ENCODE measurements at regions of chr19 and their contacts with region 1.

Region 1: DNA sequence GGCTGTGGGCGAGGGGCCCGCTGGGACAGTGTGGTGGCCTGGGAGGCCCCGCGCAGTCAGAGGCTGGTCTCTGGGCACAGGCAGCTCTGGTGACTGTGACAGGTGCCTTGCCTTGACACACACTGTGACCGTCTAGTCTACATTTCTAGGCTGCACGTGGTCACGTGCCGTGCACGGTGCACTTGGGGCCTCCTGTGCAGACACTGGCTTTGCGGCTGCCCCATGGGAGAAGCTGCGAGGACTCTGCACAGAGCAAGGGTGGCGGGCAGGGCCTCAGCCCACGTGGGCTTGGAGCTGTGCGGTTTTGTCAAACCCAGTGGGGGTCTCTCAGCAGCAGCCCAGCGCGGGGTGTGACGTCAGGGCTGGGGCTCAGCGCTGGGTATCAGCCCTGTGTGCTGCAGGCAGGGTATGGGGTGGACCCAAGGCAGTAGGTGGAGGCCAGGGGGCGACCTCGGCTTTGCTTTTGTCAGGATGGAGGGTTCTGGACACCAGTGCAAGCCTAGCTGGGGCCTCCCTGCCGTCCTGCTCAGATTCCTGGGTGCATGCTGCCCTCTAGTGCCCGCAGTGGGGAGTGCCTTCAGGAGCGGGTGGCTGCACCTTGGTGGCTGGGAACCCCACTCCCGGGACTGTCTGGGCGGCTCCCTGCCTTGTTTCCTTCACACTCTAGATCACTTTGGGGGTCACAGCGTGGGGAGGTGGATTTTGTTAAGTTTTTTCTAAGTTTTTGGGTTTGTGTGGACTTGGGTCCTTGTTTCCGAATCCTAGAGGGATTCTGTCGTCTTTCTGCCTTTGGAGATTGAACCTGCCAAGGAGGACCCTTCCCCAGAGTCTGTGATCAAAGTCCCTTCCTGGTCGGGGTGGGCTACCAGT is 62.6 kb downstream of the KDM4B start:
- DNase-seq: peak; percentile 12
- ATAC-seq: peak; percentile 98
- H3K4me3 ChIP-seq: no peak overlapping the region
- H3K27ac ChIP-seq: no peak overlapping the region
- H3K4me1 ChIP-seq: peaks cover 7% of the 10 kb centered on the region
- H3K27me3 ChIP-seq: no peaks in the 10 kb centered on the region
- CTCF ChIP-seq: peak; percentile 92 to 97 (median 96); a peak in 5 of 6 replicates
- EP300 ChIP-seq: no peak
- POLR2A ChIP-seq: no peak
- RAD21 ChIP-seq: peak; percentile 90

Region 2: DNA sequence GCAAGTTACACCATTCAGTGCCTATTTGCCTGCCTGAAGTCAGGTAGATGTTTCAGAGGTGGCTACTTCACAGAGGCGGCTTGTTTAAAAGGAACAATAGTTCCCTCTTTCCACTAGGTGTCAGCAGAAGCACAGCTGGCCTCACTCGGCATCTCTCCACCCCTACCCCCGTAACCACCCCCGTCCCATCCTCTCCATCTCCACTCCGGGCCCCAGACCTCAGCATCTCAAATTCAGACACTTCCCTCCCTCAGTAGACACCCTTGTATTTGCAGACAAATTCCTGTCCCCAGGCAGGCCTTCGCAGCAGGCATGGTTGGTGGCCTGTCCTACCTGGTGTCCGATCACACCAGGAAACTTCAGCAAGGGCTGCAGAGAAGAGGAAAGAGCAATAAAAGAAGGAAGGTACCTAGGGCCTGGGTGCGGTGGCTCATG is 298.8 kb before region 1 on chr19:
- CTCF ChIA-PET with region 1: no interaction called
- POLR2A ChIA-PET with region 1: no interaction called
- RAD21 ChIA-PET with region 1: no interaction called
- SMC1A ChIA-PET with region 1: no interaction called
- in situ Hi-C with region 1: no loop called
- intact Hi-C with region 1: loop called (anchors 5 kb)
- DNase-seq: no peak
- ATAC-seq: peak; percentile 97
- H3K4me3 ChIP-seq: no peak overlapping the region
- H3K27ac ChIP-seq: no peak overlapping the region
- H3K4me1 ChIP-seq: no peaks in the 10 kb centered on the region
- H3K27me3 ChIP-seq: no peaks in the 10 kb centered on the region
- CTCF ChIP-seq: peak; percentile 67 to 89 (median 79)
- EP300 ChIP-seq: no peak
- POLR2A ChIP-seq: no peak
- RAD21 ChIP-seq: peak; percentile 75

Region 3: GRCh38 chr19:4803736-4804695 is 227.4 kb before region 1 on chr19:
- CTCF ChIA-PET with region 1: interaction called, 72 read pairs
- POLR2A ChIA-PET with region 1: no interaction called
- RAD21 ChIA-PET with region 1: interaction called, 35 read pairs
- SMC1A ChIA-PET with region 1: interaction called, 15 read pairs
- in situ Hi-C with region 1: loop called (anchors 5 kb)
- intact Hi-C with region 1: loop called (anchors 1 kb)
- DNase-seq: no peak
- ATAC-seq: peak; percentile 95
- H3K4me3 ChIP-seq: no peak overlapping the region
- H3K27ac ChIP-seq: no peak overlapping the region
- H3K4me1 ChIP-seq: peaks cover 6% of the 10 kb centered on the region
- H3K27me3 ChIP-seq: no peaks in the 10 kb centered on the region
- CTCF ChIP-seq: peak; percentile 86 to 93 (median 90)
- EP300 ChIP-seq: no peak
- POLR2A ChIP-seq: no peak
- RAD21 ChIP-seq: peak; percentile 66

Region 4: DNA sequence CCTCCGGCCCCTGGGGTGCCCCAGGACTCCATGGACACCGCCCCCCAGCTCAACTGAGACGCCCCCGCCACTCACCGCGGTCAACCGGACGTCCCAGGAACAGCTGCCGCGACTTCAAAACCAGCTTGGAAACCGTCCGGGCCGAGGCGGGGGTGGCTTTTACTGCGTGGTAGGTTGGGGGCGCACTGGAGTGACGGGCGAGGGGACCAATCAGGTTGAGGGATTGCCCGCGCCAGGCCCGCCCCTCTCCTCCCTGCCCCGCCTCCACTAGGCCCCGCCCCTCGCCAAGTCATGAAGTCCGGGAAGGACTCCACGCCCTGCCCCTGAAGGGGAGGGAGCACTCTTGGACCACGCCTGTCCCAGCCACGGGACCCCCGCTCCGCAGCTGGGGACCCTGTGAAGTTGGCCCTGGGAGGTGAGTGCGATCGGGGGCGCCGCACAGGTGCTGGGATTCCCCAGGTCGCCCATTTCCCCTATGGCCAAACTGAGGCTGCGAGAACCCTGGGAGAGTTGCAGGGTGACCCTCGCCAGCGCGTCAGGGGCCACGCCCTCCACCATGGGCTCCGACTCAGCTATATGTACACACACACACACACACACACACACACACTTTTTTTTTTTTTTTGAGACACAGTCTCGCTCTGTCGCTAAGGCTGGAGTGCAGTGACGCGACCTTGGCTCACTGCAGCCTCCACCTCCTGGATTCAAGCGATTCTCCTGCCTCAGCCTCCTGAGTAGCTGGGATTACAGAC is 163.8 kb before region 1 on chr19 and contains the start of gene PLIN3:
- CTCF ChIA-PET with region 1: interaction called, 48 read pairs
- POLR2A ChIA-PET with region 1: no interaction called
- RAD21 ChIA-PET with region 1: interaction called, 9 read pairs
- SMC1A ChIA-PET with region 1: interaction called, 3 read pairs
- in situ Hi-C with region 1: loop called (anchors 5 kb)
- intact Hi-C with region 1: loop called (anchors 1 kb)
- DNase-seq: peak; percentile 65
- ATAC-seq: peak; percentile 86
- H3K4me3 ChIP-seq: peak within 1 kb of the TSS; percentile 98
- H3K27ac ChIP-seq: peak within 1 kb of the TSS; percentile 85
- H3K4me1 ChIP-seq: peaks cover 15% of the 10 kb centered on the region
- H3K27me3 ChIP-seq: no peaks in the 10 kb centered on the region
- CTCF ChIP-seq: no peak
- EP300 ChIP-seq: no peak
- POLR2A ChIP-seq: peak; percentile 74
- RAD21 ChIP-seq: no peak
- polyA plus RNA-seq, gene PLIN3: 7.7 to 19.0 TPM

Region 5: DNA sequence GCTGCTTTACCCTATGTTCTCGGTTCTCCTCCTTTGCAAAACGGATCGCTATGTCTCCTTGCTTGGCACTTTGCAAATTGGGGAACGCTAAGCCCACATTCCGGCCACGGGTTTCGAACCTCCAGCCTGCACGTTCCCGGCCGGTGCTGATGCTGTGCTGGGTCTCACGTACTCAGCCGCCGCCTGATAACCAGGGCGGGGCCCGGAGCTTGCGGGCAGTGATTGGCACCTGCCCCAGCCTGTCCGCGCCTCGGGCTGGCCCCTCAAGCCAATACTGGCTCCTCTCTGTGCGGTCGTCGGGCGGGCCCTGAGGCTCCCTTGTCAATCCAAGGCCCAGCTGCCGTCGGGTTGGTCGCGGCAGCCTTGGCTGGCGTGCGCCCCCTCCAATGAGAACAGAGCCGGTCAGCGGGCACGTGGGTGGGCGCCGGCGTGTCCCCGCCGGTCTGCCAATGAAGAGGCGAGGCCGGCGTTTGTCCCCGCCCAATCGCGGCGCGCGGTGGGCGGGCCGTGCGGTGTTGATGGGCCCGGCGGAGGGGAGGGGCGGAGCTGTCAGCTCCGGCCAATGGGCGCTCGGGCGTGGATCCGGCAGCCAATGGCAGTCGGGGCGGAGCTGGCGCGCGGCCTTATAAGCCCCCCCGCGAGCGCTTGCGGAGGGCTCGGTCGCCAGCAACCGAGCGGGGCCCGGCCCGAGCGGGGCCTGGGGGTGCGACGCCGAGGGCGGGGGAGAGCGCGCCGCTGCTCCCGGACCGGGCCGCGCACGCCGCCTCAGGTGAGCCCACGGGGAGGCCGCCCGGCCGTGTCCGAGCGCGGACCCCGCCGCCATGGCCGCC is 62.8 kb before region 1 on chr19 and contains the start of gene KDM4B:
- CTCF ChIA-PET with region 1: interaction called, 8 read pairs
- POLR2A ChIA-PET with region 1: no interaction called
- RAD21 ChIA-PET with region 1: interaction called, 5 read pairs
- SMC1A ChIA-PET with region 1: interaction called, 4 read pairs
- in situ Hi-C with region 1: no loop called
- intact Hi-C with region 1: loop called (anchors 2 kb)
- DNase-seq: peak; percentile 96
- ATAC-seq: peak; percentile 97
- H3K4me3 ChIP-seq: peak within 1 kb of the TSS; percentile 95
- H3K27ac ChIP-seq: peak within 1 kb of the TSS; percentile 67
- H3K4me1 ChIP-seq: peaks cover 12% of the 10 kb centered on the region
- H3K27me3 ChIP-seq: no peaks in the 10 kb centered on the region
- CTCF ChIP-seq: no peak
- EP300 ChIP-seq: no peak
- POLR2A ChIP-seq: peak; percentile 98
- RAD21 ChIP-seq: no peak
- polyA plus RNA-seq, gene KDM4B: 0.47 to 1.8 TPM

Region 6: GRCh38 chr19:5001615-5002014 is 29.9 kb before region 1 on chr19:
- CTCF ChIA-PET with region 1: interaction called, 20 read pairs
- POLR2A ChIA-PET with region 1: no interaction called
- RAD21 ChIA-PET with region 1: interaction called, 5 read pairs
- SMC1A ChIA-PET with region 1: interaction called, 9 read pairs
- in situ Hi-C with region 1: no loop called
- intact Hi-C with region 1: no loop called
- DNase-seq: no peak
- ATAC-seq: peak; percentile 82
- H3K4me3 ChIP-seq: no peak overlapping the region
- H3K27ac ChIP-seq: no peak overlapping the region
- H3K4me1 ChIP-seq: no peaks in the 10 kb centered on the region
- H3K27me3 ChIP-seq: no peaks in the 10 kb centered on the region
- CTCF ChIP-seq: peak; percentile 46 to 68 (median 68)
- EP300 ChIP-seq: no peak
- POLR2A ChIP-seq: no peak
- RAD21 ChIP-seq: peak; percentile 40; the same call in 1 of the 2 replicates